ENCODE measurements at regions of chr15 and their contacts with region 1.

Region 1: DNA sequence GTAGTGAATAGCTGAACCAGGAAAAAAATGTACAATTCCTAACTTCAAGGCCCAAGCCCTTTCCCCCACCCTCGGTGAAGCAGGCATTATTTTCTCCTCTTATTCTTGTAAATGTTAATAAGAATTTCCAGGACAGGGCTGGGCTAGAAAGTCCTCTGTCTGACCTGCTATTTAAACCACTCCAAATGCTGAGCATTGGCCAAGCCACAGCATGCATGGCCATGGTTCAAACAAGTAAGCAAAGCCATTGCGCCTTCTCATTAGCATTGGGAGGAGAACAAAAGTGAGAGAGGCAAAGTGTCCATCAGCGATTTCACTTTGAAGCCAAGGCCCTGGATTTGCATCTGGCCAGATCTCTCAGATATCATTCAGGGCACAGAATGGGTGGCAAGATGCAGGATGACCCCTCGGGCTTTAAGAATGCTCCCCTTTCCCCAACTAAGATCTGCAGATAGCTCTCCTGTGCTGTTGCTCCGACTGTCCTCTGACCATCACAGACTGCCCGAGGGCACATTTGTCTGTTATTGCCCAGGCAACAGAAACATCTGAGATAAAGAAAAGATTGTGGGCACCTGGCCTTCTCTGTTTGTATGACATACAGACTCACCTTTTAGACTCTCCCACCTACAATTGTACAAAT is 46.3 kb downstream of the CEMIP start:
- DNase-seq: no peak
- H3K4me3 ChIP-seq: no peak overlapping the region
- H3K27ac ChIP-seq: no peak overlapping the region
- H3K4me1 ChIP-seq: no peaks in the 10 kb centered on the region
- H3K27me3 ChIP-seq: no peaks in the 10 kb centered on the region
- CTCF ChIP-seq: no peak
- EP300 ChIP-seq: no peak
- POLR2A ChIP-seq: no peak

Region 2: GRCh38 chr15:80785335-80785734 is 40.2 kb before region 1 on chr15:
- intact Hi-C with region 1: loop called in 1 of 4 experiments (anchors 2 kb)
- DNase-seq: no peak
- H3K4me3 ChIP-seq: no peak overlapping the region
- H3K27ac ChIP-seq: no peak overlapping the region
- H3K4me1 ChIP-seq: peaks cover 4% of the 10 kb centered on the region
- H3K27me3 ChIP-seq: no peaks in the 10 kb centered on the region
- CTCF ChIP-seq: no peak
- EP300 ChIP-seq: no peak
- POLR2A ChIP-seq: no peak